Right lobe of liver (tissue), 6 donors: ENCODE measurements at regions of chr13 and their contacts with region 1.

Region 1: GRCh38 chr13:31431722-31432137 is 232.0 kb downstream of the B3GLCT start:
- DNase-seq: peak in 2 of 3 donors; percentile 26 to 51
- ATAC-seq: peak; percentile 59 to 81 (median 74)
- H3K4me3 ChIP-seq: no peak overlapping the region
- H3K27ac ChIP-seq: no peak overlapping the region
- H3K4me1 ChIP-seq: no peaks in the 10 kb centered on the region
- H3K27me3 ChIP-seq: no peaks in the 10 kb centered on the region
- CTCF ChIP-seq: peak; percentile 45 to 92 (median 85)
- POLR2A ChIP-seq: no peak

Region 2: GRCh38 chr13:31518645-31519044 is 86.9 kb after region 1 on chr13:
- intact Hi-C with region 1: no loop called
- DNase-seq: no peak
- ATAC-seq: no peak
- H3K4me3 ChIP-seq: no peak overlapping the region
- H3K27ac ChIP-seq: no peak overlapping the region
- H3K4me1 ChIP-seq: no peaks in the 10 kb centered on the region
- H3K27me3 ChIP-seq: peaks cover 0 to 4% of the 10 kb centered on the region in 2 donors
- CTCF ChIP-seq: no peak
- POLR2A ChIP-seq: no peak

Region 3: GRCh38 chr13:31614704-31615103 is 183.0 kb after region 1 on chr13:
- intact Hi-C with region 1: no loop called
- DNase-seq: no peak
- ATAC-seq: no peak
- H3K4me3 ChIP-seq: no peak overlapping the region
- H3K27ac ChIP-seq: no peak overlapping the region
- H3K4me1 ChIP-seq: no peaks in the 10 kb centered on the region
- H3K27me3 ChIP-seq: no peaks in the 10 kb centered on the region
- CTCF ChIP-seq: no peak
- POLR2A ChIP-seq: no peak

Region 4: DNA sequence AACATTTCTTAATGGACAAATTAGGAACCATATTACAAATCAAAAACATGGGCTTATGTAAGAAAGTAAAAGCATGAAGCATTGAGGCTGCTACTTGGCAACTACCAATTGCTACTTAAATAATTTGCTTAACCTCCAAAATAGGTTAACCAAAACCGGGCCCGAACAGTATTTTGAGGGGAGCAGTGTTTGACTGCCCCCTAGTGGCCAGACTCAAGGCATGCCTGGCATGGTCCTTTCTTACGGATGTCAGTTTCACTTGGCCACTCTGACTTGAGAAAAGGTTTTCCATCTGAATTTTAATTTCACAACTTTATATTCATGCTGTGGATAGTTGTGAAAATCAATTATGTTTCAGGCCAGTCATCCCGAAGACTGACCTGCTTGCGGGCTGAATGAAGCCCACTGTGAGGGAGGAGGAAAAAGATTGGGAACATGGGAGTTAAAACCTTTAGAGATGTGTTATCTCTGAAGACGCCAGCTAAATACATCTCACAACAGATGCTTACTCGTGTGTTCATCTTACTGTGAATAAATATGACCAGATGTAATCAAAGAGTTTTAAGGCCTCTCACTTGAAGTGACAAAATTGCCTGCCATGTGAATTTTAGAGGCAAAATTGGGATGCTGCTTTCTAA is 310.5 kb after region 1 on chr13:
- intact Hi-C with region 1: loop called in 1 of 2 experiments (anchors 10 kb)
- DNase-seq: peak; percentile 49 to 70 (median 68)
- ATAC-seq: peak; percentile 95 to 98 (median 96)
- H3K4me3 ChIP-seq: no peak overlapping the region
- H3K27ac ChIP-seq: no peak overlapping the region
- H3K4me1 ChIP-seq: no peaks in the 10 kb centered on the region
- H3K27me3 ChIP-seq: peaks cover 2 to 3% of the 10 kb centered on the region in 2 donors
- CTCF ChIP-seq: peak; percentile 89 to 100 (median 100)
- POLR2A ChIP-seq: no peak